ENCODE measurements at regions of chr3 and their contacts with region 1.

Region 1: DNA sequence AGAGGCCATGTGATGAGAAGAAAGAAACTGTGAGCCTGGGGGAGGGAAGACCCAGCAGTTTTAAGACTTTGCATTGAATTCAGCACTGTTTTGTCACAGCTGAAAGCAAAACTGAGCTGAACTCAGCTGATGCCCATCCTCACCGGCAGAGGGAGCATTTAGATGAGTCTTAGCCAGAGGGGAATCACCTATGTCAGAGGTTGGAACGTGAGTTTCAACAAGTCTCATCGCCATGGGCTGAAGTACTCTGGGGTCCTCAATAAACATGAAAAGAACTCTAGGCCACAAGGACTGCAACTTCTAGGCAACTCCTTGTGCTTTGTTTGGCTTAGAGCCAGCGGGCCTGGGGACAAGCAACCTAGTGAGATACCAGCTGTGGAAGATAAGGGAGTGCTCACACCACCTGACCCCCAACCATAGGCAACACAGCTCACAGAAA is 324.5 kb downstream of the TBL1XR1 start:
- DNase-seq: peak; percentile 36
- CTCF ChIP-seq: peak; percentile 84

Region 2: DNA sequence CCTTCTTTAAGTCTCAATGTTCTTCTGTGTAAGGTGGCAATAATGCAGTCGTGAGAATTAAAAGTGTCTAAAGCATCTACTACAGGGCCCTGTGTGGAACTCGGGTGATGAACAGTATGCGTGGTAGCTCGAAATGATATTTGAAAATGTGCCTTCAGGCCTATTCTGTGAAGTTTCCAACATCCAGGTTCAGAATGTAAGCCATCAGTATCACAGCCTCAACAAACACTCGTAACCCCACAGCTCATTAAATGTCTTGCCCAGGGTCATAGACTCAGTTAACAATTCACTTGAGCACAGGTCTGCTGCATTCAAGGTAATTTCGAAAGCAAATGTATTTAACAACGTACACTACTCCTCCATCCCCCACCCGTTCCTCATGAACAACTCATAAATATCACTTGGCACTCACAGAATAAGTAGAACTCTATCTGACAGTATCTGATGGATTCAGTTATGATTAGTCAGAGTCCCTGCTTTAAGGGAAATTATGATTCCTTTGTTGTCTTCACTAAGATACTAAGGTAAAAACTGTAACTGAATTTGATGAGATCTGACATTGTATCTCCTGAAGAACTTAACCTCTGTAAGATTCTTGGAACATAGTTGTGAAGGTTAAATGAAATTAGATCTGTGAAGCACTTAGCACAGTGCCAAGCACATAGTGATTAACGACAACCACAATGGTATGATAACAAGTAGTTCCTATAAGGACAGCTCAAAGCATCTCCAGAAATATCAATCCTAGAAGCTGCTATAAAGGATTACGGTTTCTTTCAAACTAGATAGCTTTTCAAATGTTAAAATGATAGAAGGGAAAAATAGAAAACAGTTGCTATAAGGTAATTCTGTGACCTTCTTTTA is 317.8 kb before region 1 on chr3:
- CTCF ChIA-PET with region 1: no interaction called
- POLR2A ChIA-PET with region 1: no interaction called
- DNase-seq: no peak
- CTCF ChIP-seq: no peak

Region 3: GRCh38 chr3:176855956-176856355 is 16.8 kb before region 1 on chr3:
- CTCF ChIA-PET with region 1: interaction called, 16 read pairs
- POLR2A ChIA-PET with region 1: no interaction called
- DNase-seq: no peak
- CTCF ChIP-seq: no peak

Region 4: DNA sequence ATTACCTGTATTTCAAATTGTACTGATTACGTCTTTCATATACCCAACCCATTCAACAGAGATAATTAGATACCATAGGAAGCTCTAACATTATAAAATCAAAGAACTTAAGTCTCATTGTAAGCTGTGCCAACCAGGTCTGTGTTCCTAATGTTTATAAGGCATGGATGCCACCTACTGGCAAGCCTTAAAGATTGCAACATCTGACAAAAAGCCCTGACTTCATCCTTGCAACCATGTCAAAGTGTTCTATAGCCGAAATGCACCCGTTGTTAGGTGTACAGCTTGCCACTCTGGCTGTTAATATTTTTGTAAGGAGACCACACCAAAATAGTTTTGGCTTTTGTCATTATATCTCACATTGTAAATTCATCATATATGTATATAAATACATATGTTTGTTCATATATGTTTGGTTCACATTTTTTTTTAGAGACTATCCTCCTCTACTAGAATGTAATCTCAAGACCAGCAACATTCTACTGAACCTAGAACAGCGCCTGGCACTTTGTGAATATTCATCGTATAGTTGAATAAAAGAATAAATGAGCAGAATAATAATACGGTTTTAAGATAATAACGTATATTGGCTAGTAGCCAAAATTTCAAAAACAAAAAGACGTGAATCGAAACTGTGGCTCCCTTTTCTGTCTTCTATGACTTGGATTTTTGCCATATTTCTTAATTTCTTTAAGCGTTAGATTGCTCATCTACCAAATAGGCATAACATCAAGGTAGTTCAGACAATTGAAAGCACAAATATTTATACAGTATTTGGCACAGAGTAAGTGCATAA is 66.4 kb after region 1 on chr3:
- CTCF ChIA-PET with region 1: interaction called, 21 read pairs
- POLR2A ChIA-PET with region 1: no interaction called
- DNase-seq: peak; percentile 65
- CTCF ChIP-seq: peak; percentile 80

Region 5: GRCh38 chr3:177441813-177442646 is 569.2 kb after region 1 on chr3:
- CTCF ChIA-PET with region 1: no interaction called
- POLR2A ChIA-PET with region 1: no interaction called
- DNase-seq: peak; percentile 70
- CTCF ChIP-seq: no peak

Region 6: DNA sequence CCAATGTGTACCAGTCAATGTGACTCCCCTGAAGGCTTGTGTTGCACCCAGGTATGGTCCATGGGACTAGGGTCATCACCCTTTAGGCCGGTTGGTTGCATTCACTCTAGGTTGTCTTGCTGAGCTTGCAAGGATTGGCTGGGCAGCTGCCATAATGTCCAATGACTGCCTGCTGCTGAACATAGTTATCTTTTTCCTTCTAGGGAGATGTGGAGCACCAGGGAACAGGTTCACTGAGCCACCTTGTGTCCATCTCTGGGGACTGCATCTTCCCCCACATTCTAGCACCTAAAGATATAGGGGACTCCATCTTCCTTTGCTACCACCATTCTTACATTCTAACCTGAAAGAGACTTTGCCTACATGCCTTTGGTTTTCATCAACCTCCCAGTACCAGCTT is 904.9 kb after region 1 on chr3:
- CTCF ChIA-PET with region 1: interaction called, 18 read pairs
- POLR2A ChIA-PET with region 1: no interaction called
- DNase-seq: peak; percentile 37
- CTCF ChIP-seq: peak; percentile 53

Measured in GM10248 (cell line).